ENCODE measurements at regions of chr16 and their contacts with region 1.

Region 1: DNA sequence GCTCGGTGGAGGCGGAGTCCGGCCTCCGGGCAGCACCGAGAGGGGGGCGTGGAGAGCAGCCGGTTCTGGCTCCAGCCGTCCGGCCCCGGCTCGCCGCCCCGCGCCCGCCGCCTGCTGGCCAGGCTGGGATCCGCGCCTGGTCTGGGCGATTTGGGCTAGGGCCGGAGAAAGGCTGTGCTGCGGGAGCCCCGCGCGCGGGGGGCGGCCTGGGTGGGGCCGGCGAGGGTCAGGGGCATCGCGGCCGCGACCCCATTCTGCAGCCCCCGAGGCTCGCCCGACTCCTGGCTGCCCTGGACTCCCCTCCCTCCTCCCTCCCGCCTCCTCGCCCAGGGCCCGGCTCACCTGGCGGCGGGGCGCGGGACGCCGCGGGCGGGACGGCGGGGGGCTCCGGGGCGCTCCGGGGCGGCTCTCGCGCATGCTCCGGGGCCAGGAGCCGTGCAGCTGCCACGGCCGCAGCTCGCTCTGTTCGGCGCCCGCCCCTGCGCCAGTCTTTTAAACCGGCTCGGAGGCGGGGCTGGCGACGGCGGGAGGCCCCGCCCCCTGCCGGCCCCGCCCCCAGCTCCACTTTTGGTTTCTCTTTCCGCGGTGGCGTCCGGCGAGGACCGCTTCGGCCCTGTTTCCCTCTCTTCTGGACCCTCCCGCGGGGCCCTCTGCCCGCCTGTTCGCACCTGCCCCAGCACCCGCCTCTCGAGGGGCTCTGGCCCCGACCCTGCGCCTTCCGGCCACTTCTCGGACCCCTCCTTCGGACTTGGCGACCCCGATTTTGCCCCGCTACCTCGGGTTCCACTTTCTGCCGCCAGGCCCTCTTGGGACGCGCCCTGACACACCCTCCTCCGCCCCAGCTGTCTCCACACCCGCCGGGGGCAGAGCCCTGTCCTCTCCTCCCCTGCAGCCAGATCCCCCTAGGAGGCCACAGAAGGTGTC is at the start of gene SOCS1:
- DNase-seq: peak; percentile 85 to 91
- ATAC-seq: peak; percentile 78 to 86 (median 83)
- H3K4me3 ChIP-seq: peak within 1 kb of the TSS; percentile 96
- H3K27ac ChIP-seq: peak within 1 kb of the TSS; percentile 95
- H3K4me1 ChIP-seq: peaks cover 16% of the 10 kb centered on the region
- H3K27me3 ChIP-seq: no peaks in the 10 kb centered on the region
- CTCF ChIP-seq: peak; percentile 78
- total RNA-seq, gene SOCS1: 0.44 to 8.4 (median 1.5) TPM

Region 2: DNA sequence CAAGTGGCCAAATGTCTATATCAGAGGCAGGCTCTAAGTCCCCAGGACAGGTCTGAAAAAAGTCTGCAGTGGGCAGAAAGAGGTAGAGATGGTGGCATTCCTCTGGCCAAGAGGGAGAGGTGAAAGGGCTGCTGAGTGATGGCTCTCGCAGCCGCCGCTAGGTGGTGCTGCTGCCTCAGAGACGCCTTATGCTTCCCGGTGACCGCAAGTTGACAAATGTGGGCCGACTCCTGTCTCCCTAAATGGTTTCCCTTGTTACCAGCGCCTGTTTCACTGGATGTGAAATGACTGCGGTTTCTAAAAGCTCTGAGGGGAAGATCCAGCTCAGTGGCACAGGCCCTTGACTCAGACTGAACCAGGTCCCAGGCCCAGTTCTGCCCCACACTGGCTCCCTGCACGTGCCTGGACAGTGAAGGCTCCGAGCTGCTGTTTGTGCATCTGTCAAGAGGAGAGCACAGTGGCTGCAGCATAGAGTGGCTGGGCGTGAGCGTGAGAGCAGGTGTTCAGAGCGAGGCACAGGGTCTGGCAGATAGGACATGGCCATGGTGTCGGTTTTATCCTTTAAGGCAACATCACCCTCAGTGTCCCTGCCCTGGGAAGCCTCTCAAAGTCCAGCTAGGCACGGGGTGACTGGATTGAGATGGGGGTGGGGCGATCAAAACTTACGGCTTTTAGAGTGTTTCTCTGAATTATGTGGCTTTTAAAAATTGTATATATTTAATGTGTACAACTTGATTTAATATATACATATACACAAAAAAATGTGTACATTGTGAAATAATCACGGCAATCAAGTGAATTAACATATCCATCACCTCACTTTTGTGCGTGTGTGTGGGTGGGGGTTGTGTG is 291.7 kb before region 1 on chr16:
- intact Hi-C with region 1: loop called in 1 of 2 experiments (anchors 2 kb)
- DNase-seq: peak; percentile 86 to 92
- ATAC-seq: peak; percentile 84 to 91 (median 88)
- H3K4me3 ChIP-seq: no peak overlapping the region
- H3K27ac ChIP-seq: peak overlapping the region; percentile 68
- H3K4me1 ChIP-seq: peaks cover 18% of the 10 kb centered on the region
- H3K27me3 ChIP-seq: no peaks in the 10 kb centered on the region
- CTCF ChIP-seq: peak; percentile 98

Region 3: DNA sequence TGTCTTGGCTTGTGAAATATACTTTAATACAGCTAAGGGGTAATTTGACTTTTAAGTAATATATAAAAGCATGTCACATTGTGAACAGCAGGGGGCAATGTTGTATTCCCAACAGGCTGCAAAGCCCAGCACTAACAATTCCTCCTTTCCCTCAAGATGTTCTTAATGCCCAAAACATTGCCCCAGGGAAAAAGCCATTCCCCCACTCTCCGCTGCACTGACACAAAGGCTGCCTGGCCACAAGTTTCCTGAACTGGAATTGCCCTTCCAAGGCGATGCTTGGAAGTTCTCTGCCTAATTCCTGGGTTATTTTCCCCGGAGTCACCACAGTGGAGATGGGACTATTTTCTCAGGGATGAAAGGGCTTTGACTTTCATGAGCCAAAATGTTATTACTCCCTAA is 284.4 kb before region 1 on chr16:
- intact Hi-C with region 1: loop called in 1 of 2 experiments (anchors 2 kb)
- DNase-seq: no peak
- ATAC-seq: peak; percentile 68 to 85 (median 71)
- H3K4me3 ChIP-seq: no peak overlapping the region
- H3K27ac ChIP-seq: no peak overlapping the region
- H3K4me1 ChIP-seq: peaks cover 5% of the 10 kb centered on the region
- H3K27me3 ChIP-seq: no peaks in the 10 kb centered on the region
- CTCF ChIP-seq: peak; percentile 76

Region 4: GRCh38 chr16:11079652-11080187 is 176.3 kb before region 1 on chr16:
- intact Hi-C with region 1: loop called in 1 of 2 experiments (anchors 5 kb)
- DNase-seq: no peak
- ATAC-seq: no peak
- H3K4me3 ChIP-seq: no peak overlapping the region
- H3K27ac ChIP-seq: no peak overlapping the region
- H3K4me1 ChIP-seq: peaks cover 7% of the 10 kb centered on the region
- H3K27me3 ChIP-seq: no peaks in the 10 kb centered on the region
- CTCF ChIP-seq: no peak

Region 5: DNA sequence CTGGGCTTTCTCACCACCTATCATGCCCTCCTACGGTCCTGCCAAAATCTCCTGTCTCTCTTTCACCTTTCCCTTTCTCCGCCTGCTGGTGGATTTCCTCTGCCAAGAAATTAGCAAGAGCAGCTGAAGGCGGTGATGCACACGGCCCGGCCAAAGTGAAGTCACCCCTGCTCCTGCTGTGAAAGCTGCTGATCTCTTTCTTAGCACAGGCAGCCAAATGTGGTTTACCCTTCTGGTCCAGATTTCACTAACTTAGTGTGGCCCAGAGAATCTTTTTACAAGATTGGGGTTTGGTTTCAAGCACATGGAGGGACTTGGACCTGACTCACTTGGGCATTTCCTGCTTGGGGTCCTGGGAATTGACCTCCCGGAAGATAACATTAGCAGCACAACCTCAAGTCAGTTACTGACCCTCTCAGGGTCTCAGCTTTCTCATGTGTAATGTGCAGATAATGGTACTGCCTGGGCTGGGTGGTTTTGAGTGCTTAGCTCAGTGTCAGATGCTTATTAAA is 155.7 kb before region 1 on chr16:
- intact Hi-C with region 1: loop called (anchors 5 kb)
- DNase-seq: peak; percentile 64 to 75
- ATAC-seq: peak in 2 of 4 donors; percentile 23 to 31
- H3K4me3 ChIP-seq: no peak overlapping the region
- H3K27ac ChIP-seq: peak overlapping the region; percentile 17
- H3K4me1 ChIP-seq: peaks cover 21% of the 10 kb centered on the region
- H3K27me3 ChIP-seq: no peaks in the 10 kb centered on the region
- CTCF ChIP-seq: no peak

Region 6: DNA sequence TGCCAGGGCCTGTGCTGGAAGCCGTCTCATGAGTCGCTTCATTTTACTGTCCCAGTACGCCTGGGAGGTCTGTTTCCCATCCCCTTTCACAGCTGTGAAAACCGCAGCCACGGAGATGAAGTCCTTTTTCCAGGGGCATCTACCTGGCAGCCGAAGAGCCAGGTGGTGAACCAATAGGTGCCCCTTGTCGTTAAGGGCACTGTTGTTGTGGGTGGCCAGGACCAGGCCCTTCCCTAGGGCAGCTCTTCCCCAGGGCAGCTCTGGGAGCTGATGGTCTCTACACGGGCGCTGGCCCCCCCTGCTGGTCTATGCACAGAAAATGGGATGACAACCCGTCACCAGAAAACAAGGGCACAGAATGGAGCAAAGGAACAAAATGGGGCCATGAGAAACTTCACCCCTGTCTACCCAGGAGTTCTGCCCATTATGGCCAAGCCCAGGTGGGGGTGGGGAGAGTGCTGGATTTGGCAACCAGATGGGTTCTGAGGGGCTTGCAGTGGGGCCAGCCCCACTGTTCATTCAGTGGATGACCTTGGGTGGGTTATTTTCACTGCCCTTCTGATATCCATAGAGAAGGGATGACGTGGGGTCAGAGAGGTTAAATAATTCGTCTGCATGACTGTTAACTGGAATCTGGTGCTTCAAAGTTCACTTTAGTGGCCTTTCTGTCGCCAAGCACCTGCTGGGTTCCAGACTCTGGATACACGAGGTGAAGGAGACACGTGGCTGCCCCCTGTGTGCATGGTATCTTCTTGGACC is 100.8 kb after region 1 on chr16:
- intact Hi-C with region 1: loop called in 1 of 2 experiments (anchors 5 kb)
- DNase-seq: peak; percentile 68 to 78
- ATAC-seq: peak; percentile 31 to 74 (median 48)
- H3K4me3 ChIP-seq: no peak overlapping the region
- H3K27ac ChIP-seq: no peak overlapping the region
- H3K4me1 ChIP-seq: peaks cover 6% of the 10 kb centered on the region
- H3K27me3 ChIP-seq: peaks cover 0 to 7% (median 0%) of the 10 kb centered on the region in 3 donors
- CTCF ChIP-seq: peak; percentile 45

Region 7: GRCh38 chr16:11689031-11689761 is 433.2 kb after region 1 on chr16:
- intact Hi-C with region 1: no loop called
- DNase-seq: no peak
- ATAC-seq: peak in 1 of 4 donors; percentile 23
- H3K4me3 ChIP-seq: no peak overlapping the region
- H3K27ac ChIP-seq: peak overlapping the region; percentile 44
- H3K4me1 ChIP-seq: peaks cover 47% of the 10 kb centered on the region
- H3K27me3 ChIP-seq: no peaks in the 10 kb centered on the region
- CTCF ChIP-seq: no peak